HCT116 (cell line): ENCODE measurements at regions of chr2 and their contacts with region 1.

Region 1: GRCh38 chr2:233928594-233929351 is 11.6 kb downstream of the TRPM8 start:
- DNase-seq: no peak
- ATAC-seq: 0 out of 2 replicates have a peak, but pooled peaks have one; percentile 38
- H3K4me3 ChIP-seq: no peak overlapping the region
- H3K27ac ChIP-seq: no peak overlapping the region
- H3K4me1 ChIP-seq: peaks cover 2 to 11% of the 10 kb centered on the region in 2 experiments; a peak in 3 of 4 replicates
- H3K27me3 ChIP-seq: peaks cover 16% of the 10 kb centered on the region; the same call in 1 of the 2 replicates
- CTCF ChIP-seq: peak; percentile 47 to 83 (median 76)
- POLR2A ChIP-seq: no peak
- RAD21 ChIP-seq: peak; percentile 58

Region 2: GRCh38 chr2:233901367-233901766 is 27.4 kb before region 1 on chr2:
- CTCF ChIA-PET with region 1: no interaction called
- POLR2A ChIA-PET with region 1: no interaction called
- RAD21 ChIA-PET with region 1: no interaction called
- intact Hi-C with region 1: no loop called
- DNase-seq: no peak
- ATAC-seq: no peak
- H3K4me3 ChIP-seq: no peak overlapping the region
- H3K27ac ChIP-seq: no peak overlapping the region
- H3K4me1 ChIP-seq: no peaks in the 10 kb centered on the region
- H3K27me3 ChIP-seq: peaks cover 28% of the 10 kb centered on the region
- CTCF ChIP-seq: no peak
- POLR2A ChIP-seq: no peak
- RAD21 ChIP-seq: no peak

Region 3: DNA sequence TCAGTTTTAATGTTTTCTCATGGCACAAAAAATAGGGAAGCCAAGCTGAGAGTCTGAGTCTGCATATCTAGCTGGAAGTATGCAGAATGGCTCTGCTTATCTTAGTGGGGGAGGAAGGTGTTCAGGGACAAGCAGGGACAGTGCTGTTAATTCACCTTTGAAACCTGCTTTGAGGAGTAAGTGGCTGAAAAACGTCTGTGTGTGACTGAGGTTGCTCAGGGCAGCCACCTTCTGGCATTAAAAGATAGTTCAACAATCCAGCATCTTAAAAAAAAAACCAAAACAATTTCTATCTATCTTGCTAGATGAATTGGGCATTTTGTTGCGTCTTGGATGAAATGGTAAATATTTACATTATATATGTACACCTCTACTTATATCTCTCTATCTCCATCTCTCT is 13.6 kb before region 1 on chr2:
- CTCF ChIA-PET with region 1: interaction called, 19 read pairs
- POLR2A ChIA-PET with region 1: interaction called, 3 read pairs
- RAD21 ChIA-PET with region 1: no interaction called
- intact Hi-C with region 1: no loop called
- DNase-seq: no peak
- ATAC-seq: peak; percentile 61; the same call in 1 of the 2 replicates
- H3K4me3 ChIP-seq: no peak overlapping the region
- H3K27ac ChIP-seq: no peak overlapping the region
- H3K4me1 ChIP-seq: peaks cover 0 to 5% of the 10 kb centered on the region in 2 experiments; a peak in 1 of 4 replicates
- H3K27me3 ChIP-seq: peaks cover 42% of the 10 kb centered on the region
- CTCF ChIP-seq: peak; percentile 12 to 42 (median 31); a peak in 4 of 6 replicates
- POLR2A ChIP-seq: no peak
- RAD21 ChIP-seq: peak; percentile 51